PC-3 (cell line): ENCODE measurements at regions of chr10 and their contacts with region 1.

Region 1: DNA sequence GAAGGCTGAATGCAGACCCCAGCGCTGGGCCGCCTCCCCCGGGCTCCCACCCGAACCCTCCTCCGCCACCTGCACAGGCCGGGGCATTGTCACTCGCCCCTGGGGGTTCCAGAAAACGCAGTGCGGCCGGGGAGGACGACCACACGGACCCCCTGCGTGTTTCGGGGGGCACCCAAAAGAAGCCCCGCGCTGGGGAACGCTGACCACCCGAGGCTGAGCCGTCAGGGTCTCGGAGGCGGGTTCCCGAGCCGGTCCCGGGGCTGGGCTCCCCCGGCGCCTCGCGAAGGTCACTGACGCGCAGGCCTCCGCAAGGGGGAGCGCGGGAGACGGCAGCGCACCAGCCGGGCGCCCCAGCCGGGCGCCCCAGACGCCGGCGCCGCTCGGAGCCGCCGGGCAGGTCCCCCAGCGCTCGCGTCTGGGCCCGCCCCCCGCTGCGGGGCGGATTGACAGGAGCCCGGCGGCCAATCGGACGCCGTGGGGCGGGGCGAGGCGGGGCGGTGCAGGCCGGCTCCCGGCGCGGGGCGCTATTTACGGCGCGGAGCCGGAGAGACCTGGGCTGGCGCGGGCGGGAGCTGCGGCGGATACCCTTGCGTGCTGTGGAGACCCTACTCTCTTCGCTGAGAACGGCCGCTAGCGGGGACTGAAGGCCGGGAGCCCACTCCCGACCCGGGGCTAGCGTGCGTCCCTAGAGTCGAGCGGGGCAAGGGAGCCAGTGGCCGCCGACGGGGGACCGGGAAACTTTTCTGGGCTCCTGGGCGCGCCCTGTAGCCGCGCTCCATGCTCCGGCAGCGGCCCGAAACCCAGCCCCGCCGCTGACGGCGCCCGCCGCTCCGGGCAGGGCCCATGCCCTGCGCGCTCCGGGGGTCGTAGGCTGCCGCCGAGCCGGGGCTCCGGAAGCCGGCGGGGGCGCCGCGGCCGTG is at the start of gene BAMBI:
- DNase-seq: peak; percentile 89
- ATAC-seq: peak; percentile 89
- H3K4me3 ChIP-seq: peak within 1 kb of the TSS; percentile 96
- H3K27ac ChIP-seq: no peak within 1 kb of the TSS
- H3K4me1 ChIP-seq: peaks cover 11% of the 10 kb centered on the region
- H3K27me3 ChIP-seq: no peaks in the 10 kb centered on the region
- CTCF ChIP-seq: peak; percentile 46; the same call in 1 of the 2 replicates
- total RNA-seq, gene BAMBI: 9.6 and 10.7 TPM in 2 replicates

Region 2: GRCh38 chr10:28505359-28505959 is 171.8 kb before region 1 on chr10:
- CTCF ChIA-PET with region 1: no interaction called
- POLR2A ChIA-PET with region 1: no interaction called
- intact Hi-C with region 1: no loop called
- DNase-seq: no peak
- ATAC-seq: no peak
- H3K4me3 ChIP-seq: no peak overlapping the region
- H3K27ac ChIP-seq: no peak overlapping the region
- H3K4me1 ChIP-seq: peaks cover 13% of the 10 kb centered on the region
- H3K27me3 ChIP-seq: no peaks in the 10 kb centered on the region
- CTCF ChIP-seq: no peak

Region 3: DNA sequence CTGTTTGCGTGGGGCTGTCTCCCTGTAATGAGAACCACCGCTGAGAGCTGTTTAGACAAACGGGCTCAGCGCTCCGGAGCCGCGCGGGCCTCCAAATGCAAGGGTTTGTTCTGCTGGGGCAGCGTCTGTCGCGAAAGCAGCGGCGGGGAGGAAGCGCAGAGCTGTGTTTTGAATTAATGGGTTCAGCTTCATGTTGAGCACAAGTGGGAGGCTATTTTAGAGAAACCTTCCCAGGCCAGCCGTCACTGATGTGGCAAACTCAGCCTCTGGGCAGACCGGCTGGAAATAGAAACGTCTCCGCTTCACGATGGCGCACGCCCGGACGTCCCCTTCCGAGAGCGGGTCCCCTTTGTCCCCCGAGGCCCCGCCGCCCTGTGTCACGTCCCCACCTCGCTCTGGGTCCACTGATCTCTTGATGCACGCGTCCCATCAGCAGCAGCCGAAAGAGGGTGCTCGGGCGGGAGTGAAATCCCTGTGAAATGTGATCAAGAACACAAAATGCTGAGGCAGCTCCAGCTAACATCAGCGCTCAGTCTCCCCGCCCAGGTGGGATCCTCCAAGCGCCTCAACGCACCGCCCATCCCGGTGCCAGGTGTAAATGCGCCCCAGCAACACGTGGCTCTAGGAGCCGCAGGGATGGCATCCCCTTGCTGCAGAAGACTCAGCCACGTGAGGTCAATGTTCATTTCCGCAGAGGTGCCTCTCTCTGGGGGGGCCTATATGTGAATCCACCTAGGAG is 45.0 kb after region 1 on chr10:
- CTCF ChIA-PET with region 1: no interaction called
- POLR2A ChIA-PET with region 1: no interaction called
- intact Hi-C with region 1: loop called (anchors 5 kb)
- DNase-seq: peak; percentile 35
- ATAC-seq: peak; percentile 66
- H3K4me3 ChIP-seq: peak overlapping the region; percentile 77
- H3K27ac ChIP-seq: no peak overlapping the region
- H3K4me1 ChIP-seq: peaks cover 21% of the 10 kb centered on the region
- H3K27me3 ChIP-seq: no peaks in the 10 kb centered on the region
- CTCF ChIP-seq: no peak

Region 4: DNA sequence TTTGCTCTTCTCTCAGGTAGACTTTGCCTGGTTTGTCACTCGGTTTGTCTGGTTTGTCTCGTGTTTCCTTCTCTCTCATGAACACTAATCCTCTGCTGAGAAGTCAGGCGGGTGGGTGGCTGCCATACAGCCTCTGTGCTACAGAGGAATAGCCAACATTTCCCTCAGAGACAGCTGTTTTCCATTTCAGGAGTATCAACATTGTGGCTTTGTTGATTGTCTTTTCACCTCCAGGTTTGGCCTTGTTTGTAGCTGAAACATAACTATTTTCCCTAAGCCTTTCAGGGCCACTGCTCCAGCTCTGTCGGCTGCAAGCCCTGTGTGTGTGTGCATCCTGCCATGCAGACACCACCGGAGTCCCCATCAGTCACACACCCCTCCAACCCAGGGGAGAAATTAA is 122.9 kb after region 1 on chr10:
- CTCF ChIA-PET with region 1: no interaction called
- POLR2A ChIA-PET with region 1: no interaction called
- intact Hi-C with region 1: loop called (anchors 5 kb)
- DNase-seq: no peak
- ATAC-seq: no peak
- H3K4me3 ChIP-seq: no peak overlapping the region
- H3K27ac ChIP-seq: no peak overlapping the region
- H3K4me1 ChIP-seq: peaks cover 30% of the 10 kb centered on the region
- H3K27me3 ChIP-seq: no peaks in the 10 kb centered on the region
- CTCF ChIP-seq: no peak

Region 5: DNA sequence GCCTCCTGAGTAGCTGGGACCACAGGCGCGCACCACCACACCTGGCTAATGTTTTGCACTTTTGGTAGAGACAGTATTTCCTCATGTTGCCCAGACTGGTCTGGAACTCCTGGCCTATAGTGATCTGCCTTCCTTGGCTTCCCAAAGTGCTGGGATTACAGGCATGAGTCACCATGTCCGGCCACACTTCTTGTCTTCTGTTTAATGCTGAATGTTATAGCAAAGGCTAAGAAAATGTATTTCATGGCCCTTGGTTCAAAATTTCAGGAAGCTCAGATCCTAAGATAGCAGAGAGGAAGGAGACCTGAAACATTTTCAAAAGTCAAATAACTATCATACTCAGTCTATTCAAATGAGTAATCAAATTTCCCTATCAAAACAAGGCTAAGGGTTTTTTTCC is 229.7 kb after region 1 on chr10:
- CTCF ChIA-PET with region 1: no interaction called
- POLR2A ChIA-PET with region 1: no interaction called
- intact Hi-C with region 1: loop called (anchors 10 kb)
- DNase-seq: peak; percentile 51
- ATAC-seq: peak; percentile 62
- H3K4me3 ChIP-seq: no peak overlapping the region
- H3K27ac ChIP-seq: peak overlapping the region; percentile 39
- H3K4me1 ChIP-seq: peaks cover 33% of the 10 kb centered on the region
- H3K27me3 ChIP-seq: no peaks in the 10 kb centered on the region
- CTCF ChIP-seq: no peak

Region 6: DNA sequence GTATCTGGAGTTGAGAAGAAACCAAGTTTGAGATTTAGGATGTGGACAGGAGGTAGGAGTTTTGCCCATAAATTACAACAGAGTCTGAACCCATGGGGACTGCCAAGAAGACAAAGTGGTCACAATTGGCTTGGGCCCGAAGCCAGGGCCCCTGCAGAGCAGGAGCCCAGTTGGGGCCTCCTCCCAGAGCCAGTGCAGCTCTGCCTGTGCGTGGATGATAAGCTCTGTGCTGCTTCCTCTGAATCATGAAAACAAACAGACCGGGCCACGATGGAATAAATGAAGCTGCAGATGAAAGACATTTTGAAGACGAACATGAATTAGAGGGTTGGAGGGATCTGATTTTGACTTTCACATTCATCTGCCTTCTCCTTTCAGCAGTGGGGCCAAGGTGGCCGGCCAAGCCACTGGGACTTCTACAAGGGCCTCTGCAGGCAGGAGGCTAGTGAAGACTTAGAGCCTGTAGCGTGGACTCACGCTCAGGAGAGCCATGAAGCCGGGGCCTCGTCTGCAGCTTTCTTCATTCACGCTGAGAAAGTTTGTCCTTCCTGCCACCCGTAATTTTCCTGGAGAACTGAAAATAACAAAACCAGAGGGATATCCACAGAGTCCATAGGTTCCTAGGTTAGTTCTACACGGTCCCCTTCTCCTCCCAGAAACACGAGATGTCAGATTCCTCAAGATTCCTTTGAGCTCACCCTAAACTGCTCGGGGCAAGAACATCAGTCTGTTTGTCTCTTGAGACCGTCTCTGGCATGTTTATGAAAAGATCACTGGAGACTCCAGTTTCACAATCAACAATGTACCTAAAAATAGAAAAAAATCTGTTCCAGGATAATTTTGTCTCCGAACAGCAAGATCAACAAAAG is 455.0 kb after region 1 on chr10:
- CTCF ChIA-PET with region 1: interaction called, 5 read pairs
- POLR2A ChIA-PET with region 1: no interaction called
- intact Hi-C with region 1: loop called (anchors 5 kb)
- DNase-seq: peak; percentile 56
- ATAC-seq: peak; percentile 85
- H3K4me3 ChIP-seq: no peak overlapping the region
- H3K27ac ChIP-seq: peak overlapping the region; percentile 46
- H3K4me1 ChIP-seq: peaks cover 12% of the 10 kb centered on the region
- H3K27me3 ChIP-seq: no peaks in the 10 kb centered on the region
- CTCF ChIP-seq: no peak